ENCODE measurements at regions of chr5 and their contacts with region 1.

Region 1: DNA sequence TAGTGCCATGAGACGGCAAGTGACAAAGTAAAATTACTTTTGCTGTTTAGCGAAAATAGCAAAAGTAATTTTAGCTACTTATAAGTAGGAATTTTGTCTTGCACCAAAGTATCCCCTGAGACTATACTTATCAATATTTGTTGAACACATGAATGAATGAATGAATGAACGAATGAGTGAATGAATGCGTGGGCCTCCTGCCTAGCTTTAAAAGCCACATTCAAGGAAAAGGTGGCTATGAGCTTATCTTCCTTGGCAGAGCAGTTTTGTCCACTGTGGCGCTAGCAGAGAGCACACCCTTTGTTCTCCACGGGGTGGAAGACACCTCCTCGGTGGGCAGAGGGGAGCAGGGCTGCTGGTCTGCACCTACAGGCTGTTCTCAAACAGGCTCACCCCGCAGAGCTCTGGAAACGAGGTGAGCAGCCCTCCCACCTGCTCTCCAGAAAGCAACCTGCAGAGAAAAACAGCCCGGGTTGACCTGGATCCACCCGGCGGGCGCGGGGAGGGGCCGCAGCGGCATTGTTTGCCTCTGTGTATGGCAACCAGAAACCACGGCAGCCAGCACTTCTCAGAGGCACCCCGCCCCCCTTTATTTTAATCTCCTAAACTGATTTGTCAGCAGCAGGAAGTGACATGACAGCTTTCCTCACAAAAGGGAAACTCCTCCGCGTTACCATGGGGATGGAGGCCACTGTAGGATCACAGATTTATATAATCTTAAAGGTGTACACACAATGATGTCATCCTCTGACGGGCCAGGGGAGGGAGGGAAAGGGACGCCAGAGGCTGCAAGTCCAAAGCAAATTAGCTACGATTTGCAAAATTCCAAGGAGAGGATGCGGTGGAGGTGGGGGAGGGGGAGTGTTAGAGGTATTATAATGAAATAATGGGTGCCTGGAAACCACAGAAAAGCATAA is 5.9 kb downstream of the DUSP1 start:
- DNase-seq: peak; percentile 95
- H3K4me3 Mint-ChIP-seq: peak overlapping the region; percentile 79
- H3K27ac Mint-ChIP-seq: peak overlapping the region; percentile 87
- H3K4me1 Mint-ChIP-seq: peaks cover 21% of the 10 kb centered on the region
- H3K27me3 Mint-ChIP-seq: peaks cover 5% of the 10 kb centered on the region

Region 2: DNA sequence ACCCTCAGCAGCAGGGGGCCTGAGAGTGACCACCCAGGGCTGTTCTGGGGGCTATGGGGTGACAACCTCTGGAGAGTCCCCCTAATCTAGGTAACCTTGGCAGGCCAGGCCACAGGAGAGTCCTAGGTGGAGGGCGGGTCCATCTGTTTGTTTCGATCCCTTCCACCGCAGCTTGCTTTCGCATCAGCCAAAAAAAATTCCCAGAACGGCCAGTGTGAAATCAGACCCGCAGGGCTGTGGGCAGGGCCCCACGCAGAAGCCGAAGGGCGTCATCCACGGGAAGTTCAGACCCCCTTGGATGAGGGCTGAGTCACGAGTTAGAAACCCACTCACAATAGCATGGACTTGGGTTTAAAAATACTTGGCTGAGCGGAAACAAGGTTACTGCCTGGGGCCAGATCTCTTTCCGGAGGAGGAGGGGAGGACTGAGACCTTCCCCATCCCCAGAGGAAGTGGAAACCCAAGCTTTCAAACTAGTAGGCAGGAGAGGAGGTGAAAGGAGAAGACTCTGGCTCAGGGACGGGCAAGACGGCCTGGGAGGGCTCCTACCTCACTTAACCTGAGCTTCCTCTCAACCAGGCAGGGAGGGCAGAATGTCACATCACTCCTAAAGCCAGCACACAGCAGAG is 585.6 kb before region 1 on chr5:
- intact Hi-C with region 1: loop called (anchors 5 kb)
- DNase-seq: peak; percentile 44
- H3K4me3 Mint-ChIP-seq: peak overlapping the region; percentile 76
- H3K27ac Mint-ChIP-seq: peak overlapping the region; percentile 92
- H3K4me1 Mint-ChIP-seq: peaks cover 73% of the 10 kb centered on the region
- H3K27me3 Mint-ChIP-seq: no peaks in the 10 kb centered on the region

Region 3: DNA sequence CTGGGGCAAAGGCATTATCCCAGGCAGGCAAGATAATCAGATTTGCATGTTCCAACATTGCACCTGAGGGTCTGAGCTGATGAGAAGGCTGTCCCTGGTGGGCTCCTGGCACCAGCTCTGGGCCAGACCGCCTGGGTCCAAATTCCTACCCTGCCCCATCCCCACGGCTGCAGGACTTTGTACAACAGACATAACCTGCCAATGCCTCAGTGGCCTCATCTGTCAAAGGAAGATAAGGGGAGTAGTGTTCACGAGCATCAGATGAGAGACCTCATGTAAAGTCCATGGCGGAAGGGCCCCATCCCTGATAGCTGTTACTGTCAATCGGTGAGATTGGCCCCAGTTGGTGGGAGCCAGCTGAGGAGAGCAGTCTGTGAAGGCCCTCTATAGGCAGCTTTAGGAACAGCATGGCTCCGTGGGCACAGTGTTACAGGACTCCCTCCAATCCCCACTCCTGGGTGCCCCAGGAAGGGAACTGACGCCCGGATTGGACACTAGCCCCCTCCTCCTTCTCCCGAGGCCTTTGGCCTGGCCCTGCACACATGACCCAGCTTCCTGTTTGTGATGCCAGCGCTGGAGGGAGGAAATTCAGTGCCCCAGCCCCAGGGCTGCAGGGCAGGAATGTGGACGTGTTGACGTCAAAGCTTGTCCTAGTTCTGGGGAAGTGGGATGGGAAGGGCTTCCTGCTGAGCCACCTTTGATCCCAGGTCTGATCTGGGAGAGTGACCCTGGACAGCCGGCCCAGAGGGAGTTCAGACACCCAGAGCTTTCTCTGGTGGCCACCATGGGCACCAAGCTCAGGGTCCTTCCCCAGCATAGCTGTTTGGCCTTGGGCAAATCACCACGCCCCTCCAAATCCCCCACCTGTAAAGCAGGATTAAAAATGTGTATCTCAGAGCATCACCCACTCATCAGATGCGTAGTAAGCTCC is 50.4 kb before region 1 on chr5:
- intact Hi-C with region 1: loop called (anchors 2 kb)
- DNase-seq: peak; percentile 48
- H3K4me3 Mint-ChIP-seq: no peak overlapping the region
- H3K27ac Mint-ChIP-seq: no peak overlapping the region
- H3K4me1 Mint-ChIP-seq: peaks cover 2% of the 10 kb centered on the region
- H3K27me3 Mint-ChIP-seq: no peaks in the 10 kb centered on the region

Region 4: GRCh38 chr5:172806897-172807672 is 42.0 kb after region 1 on chr5:
- intact Hi-C with region 1: loop called (anchors 1 kb)
- DNase-seq: peak; percentile 78
- H3K4me3 Mint-ChIP-seq: peak overlapping the region; percentile 58
- H3K27ac Mint-ChIP-seq: peak overlapping the region; percentile 91
- H3K4me1 Mint-ChIP-seq: peaks cover 14% of the 10 kb centered on the region
- H3K27me3 Mint-ChIP-seq: no peaks in the 10 kb centered on the region

Region 5: GRCh38 chr5:172958331-172959046 is 193.4 kb after region 1 on chr5:
- intact Hi-C with region 1: loop called (anchors 1 kb)
- DNase-seq: peak; percentile 54
- H3K4me3 Mint-ChIP-seq: peak overlapping the region; percentile 92
- H3K27ac Mint-ChIP-seq: peak overlapping the region; percentile 95
- H3K4me1 Mint-ChIP-seq: peaks cover 13% of the 10 kb centered on the region
- H3K27me3 Mint-ChIP-seq: peaks cover 2% of the 10 kb centered on the region